Right ventricle myocardium superior (tissue), 1 donor: ENCODE measurements at regions of chr12 and their contacts with region 1.

Region 1: DNA sequence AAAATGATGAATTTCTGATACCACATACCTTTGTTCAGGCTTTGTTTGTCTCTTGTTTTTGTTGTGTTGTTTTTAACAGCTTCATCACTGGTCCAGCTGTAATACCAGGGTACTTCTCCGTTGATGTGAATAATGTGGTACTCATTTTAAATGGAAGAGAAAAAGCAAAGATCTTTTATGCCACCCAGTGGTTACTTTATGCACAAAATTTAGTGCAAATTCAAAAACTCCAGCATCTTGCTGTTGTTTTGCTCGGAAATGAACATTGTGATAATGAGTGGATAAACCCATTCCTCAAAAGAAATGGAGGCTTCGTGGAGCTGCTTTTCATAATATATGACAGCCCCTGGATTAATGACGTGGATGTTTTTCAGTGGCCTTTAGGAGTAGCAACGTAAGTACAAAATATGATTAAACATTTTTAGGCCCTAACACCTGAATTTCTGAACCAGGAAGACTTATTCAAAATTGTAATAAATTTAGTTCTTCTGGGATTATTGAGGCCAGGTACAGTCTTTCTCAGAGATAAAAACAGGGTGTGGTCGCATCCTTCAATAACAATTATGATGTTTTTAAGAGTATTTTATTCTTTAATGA is 22.4 kb downstream of the RXYLT1 start:
- DNase-seq: no peak
- ATAC-seq: peak; percentile 31

Region 2: GRCh38 chr12:63103494-63104131 is 698.5 kb before region 1 on chr12:
- intact Hi-C with region 1: loop called (anchors 10 kb)
- DNase-seq: no peak
- ATAC-seq: no peak

Region 3: GRCh38 chr12:63420206-63420644 is 381.9 kb before region 1 on chr12:
- intact Hi-C with region 1: loop called (anchors 10 kb)
- DNase-seq: no peak
- ATAC-seq: peak; percentile 80

Region 4: DNA sequence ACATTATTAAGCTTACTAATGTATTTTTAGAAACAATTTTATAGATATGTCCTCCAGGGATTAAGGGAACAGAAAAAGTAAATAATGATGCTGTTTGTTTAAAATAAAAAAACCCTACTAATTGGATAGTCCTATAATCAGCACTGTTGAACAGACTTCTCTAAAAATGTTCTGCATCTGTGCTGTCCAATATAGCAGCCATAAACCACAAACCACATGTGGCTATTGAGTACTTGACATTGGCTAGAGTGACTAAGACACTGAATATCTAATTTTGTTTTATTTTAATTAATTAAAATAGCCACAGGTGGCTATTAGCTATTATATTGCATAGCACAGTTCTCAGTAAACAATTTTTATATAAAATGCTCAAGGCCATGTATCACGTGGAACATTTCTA is 344.3 kb before region 1 on chr12:
- intact Hi-C with region 1: no loop called
- DNase-seq: no peak
- ATAC-seq: no peak